GM12878 (cell line): ENCODE measurements at regions of chr17 and their contacts with region 1.

Region 1: GRCh38 chr17:50361561-50362480 is 11.2 kb downstream of the MRPL27 start:
- DNase-seq: no peak
- ATAC-seq: peak; percentile 94
- H3K4me3 ChIP-seq: no peak overlapping the region
- H3K27ac ChIP-seq: no peak overlapping the region
- H3K4me1 ChIP-seq: no peaks in the 10 kb centered on the region
- H3K27me3 ChIP-seq: no peaks in the 10 kb centered on the region
- CTCF ChIP-seq: peak; percentile 79 to 83 (median 80)
- EP300 ChIP-seq: no peak
- POLR2A ChIP-seq: 0 out of 2 replicates have a peak, but pooled peaks have one; percentile 28
- RAD21 ChIP-seq: peak; percentile 63

Region 2: DNA sequence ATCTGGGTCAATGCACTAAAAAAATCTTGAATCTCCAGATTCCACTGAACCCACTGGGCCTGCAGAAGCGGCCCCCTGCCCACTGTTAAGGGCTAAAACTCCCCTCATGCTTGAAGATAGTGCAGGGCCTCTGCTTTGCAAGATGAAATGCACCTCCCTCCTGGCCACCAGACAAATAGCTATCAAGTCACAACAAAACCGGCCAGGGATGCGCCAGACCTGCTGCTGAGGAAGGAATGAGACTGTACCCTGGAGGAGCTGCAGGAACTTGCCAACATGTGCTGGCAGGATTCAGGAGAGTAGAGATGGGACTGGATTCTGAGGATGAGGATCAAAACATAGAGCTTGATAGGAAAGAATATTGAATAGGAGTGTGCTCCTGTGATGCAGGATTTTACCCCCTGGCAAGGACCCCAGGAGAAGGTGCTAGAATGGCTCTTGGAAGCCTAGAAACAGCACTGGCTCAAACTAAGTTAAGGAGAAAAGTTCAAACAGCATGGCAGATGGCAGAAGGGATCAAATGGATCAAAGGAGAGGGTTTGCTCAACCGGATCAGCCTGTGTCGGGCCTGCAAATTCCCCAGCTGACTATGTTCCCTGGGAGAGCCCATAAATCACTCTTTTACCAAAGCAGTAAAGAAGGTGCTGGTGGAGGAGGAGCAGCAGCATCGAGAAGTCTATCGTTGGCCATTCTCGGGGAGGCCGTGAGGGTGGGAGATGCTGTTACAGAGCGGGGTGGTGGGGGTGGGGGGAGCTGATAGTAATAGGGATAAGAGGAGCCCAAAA is 43.1 kb before region 1 on chr17:
- CTCF ChIA-PET with region 1: interaction called, 12 read pairs
- POLR2A ChIA-PET with region 1: no interaction called
- RAD21 ChIA-PET with region 1: interaction called, 5 read pairs
- SMC1A ChIA-PET with region 1: interaction called, 9 read pairs
- in situ Hi-C with region 1: no loop called
- intact Hi-C with region 1: no loop called
- DNase-seq: no peak
- ATAC-seq: no peak
- H3K4me3 ChIP-seq: no peak overlapping the region
- H3K27ac ChIP-seq: no peak overlapping the region
- H3K4me1 ChIP-seq: peaks cover 4% of the 10 kb centered on the region; the same call in 1 of the 2 replicates
- H3K27me3 ChIP-seq: no peaks in the 10 kb centered on the region
- CTCF ChIP-seq: no peak
- EP300 ChIP-seq: no peak
- POLR2A ChIP-seq: no peak
- RAD21 ChIP-seq: no peak

Region 3: GRCh38 chr17:50372758-50373556 is 11.1 kb after region 1 on chr17 and contains the starts of genes EME1 and MRPL27:
- CTCF ChIA-PET with region 1: interaction called, 48 read pairs
- POLR2A ChIA-PET with region 1: interaction called, 5 read pairs
- RAD21 ChIA-PET with region 1: no interaction called
- SMC1A ChIA-PET with region 1: interaction called, 9 read pairs
- in situ Hi-C with region 1: no loop called
- intact Hi-C with region 1: no loop called
- DNase-seq: peak; percentile 85
- ATAC-seq: peak; percentile 95
- H3K4me3 ChIP-seq: peak within 1 kb of the TSS; percentile 72
- H3K27ac ChIP-seq: peak within 1 kb of the TSS; percentile 95
- H3K4me1 ChIP-seq: no peaks in the 10 kb centered on the region; the same call in 1 of the 2 replicates
- H3K27me3 ChIP-seq: no peaks in the 10 kb centered on the region
- CTCF ChIP-seq: no peak
- EP300 ChIP-seq: peak in 1 of 2 experiments; percentile 54; a peak in 1 of 4 replicates
- POLR2A ChIP-seq: peak; percentile 99
- RAD21 ChIP-seq: no peak
- polyA plus RNA-seq, gene EME1: 13.8 to 16.7 TPM
- polyA plus RNA-seq, gene MRPL27: 380 to 390 TPM

Region 4: DNA sequence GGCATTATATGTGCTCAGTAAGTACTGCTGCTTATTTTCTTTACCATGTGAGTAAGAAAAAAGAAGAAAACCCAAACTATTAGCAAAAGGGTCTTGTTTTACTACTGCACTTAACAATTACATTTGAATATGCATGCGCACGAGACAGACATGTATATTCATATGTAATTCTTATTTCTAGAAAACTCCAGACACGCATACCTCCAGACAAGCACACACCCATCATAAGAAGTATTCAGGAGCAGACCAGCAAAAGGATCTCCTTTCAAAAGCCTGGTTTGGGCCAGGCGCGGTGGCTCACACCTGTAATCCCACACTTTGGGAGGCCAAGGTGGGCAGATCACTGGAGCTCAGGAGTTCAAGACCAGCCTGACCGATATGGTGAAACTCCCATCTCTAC is 27.7 kb after region 1 on chr17:
- CTCF ChIA-PET with region 1: interaction called, 18 read pairs
- POLR2A ChIA-PET with region 1: interaction called, 7 read pairs
- RAD21 ChIA-PET with region 1: interaction called, 6 read pairs
- SMC1A ChIA-PET with region 1: interaction called, 16 read pairs
- in situ Hi-C with region 1: no loop called
- intact Hi-C with region 1: no loop called
- DNase-seq: no peak
- ATAC-seq: no peak
- H3K4me3 ChIP-seq: no peak overlapping the region
- H3K27ac ChIP-seq: no peak overlapping the region
- H3K4me1 ChIP-seq: peaks cover 13% of the 10 kb centered on the region
- H3K27me3 ChIP-seq: no peaks in the 10 kb centered on the region
- CTCF ChIP-seq: no peak
- EP300 ChIP-seq: no peak
- POLR2A ChIP-seq: no peak
- RAD21 ChIP-seq: no peak

Region 5: GRCh38 chr17:50414808-50415207 is 53.0 kb after region 1 on chr17:
- CTCF ChIA-PET with region 1: interaction called, 4 read pairs
- POLR2A ChIA-PET with region 1: no interaction called
- RAD21 ChIA-PET with region 1: no interaction called
- SMC1A ChIA-PET with region 1: interaction called, 6 read pairs
- in situ Hi-C with region 1: loop called (anchors 5 kb)
- intact Hi-C with region 1: no loop called
- DNase-seq: no peak
- ATAC-seq: no peak
- H3K4me3 ChIP-seq: no peak overlapping the region
- H3K27ac ChIP-seq: no peak overlapping the region
- H3K4me1 ChIP-seq: no peaks in the 10 kb centered on the region
- H3K27me3 ChIP-seq: no peaks in the 10 kb centered on the region
- CTCF ChIP-seq: no peak
- EP300 ChIP-seq: no peak
- POLR2A ChIP-seq: no peak
- RAD21 ChIP-seq: no peak

Region 6: GRCh38 chr17:50613007-50613992 is 251.5 kb after region 1 on chr17:
- CTCF ChIA-PET with region 1: no interaction called
- POLR2A ChIA-PET with region 1: no interaction called
- RAD21 ChIA-PET with region 1: no interaction called
- SMC1A ChIA-PET with region 1: no interaction called
- in situ Hi-C with region 1: no loop called
- intact Hi-C with region 1: no loop called
- DNase-seq: no peak
- ATAC-seq: no peak
- H3K4me3 ChIP-seq: no peak overlapping the region
- H3K27ac ChIP-seq: no peak overlapping the region
- H3K4me1 ChIP-seq: no peaks in the 10 kb centered on the region
- H3K27me3 ChIP-seq: peaks cover 0 to 6% of the 10 kb centered on the region in 2 experiments; a peak in 2 of 4 replicates
- CTCF ChIP-seq: no peak
- EP300 ChIP-seq: no peak
- POLR2A ChIP-seq: no peak
- RAD21 ChIP-seq: no peak

Region 7: GRCh38 chr17:50649042-50649904 is 287.5 kb after region 1 on chr17:
- CTCF ChIA-PET with region 1: no interaction called
- POLR2A ChIA-PET with region 1: no interaction called
- RAD21 ChIA-PET with region 1: no interaction called
- SMC1A ChIA-PET with region 1: no interaction called
- in situ Hi-C with region 1: no loop called
- intact Hi-C with region 1: no loop called
- DNase-seq: no peak
- ATAC-seq: 0 out of 3 replicates have a peak, but pooled peaks have one; percentile 19
- H3K4me3 ChIP-seq: no peak overlapping the region
- H3K27ac ChIP-seq: no peak overlapping the region
- H3K4me1 ChIP-seq: no peaks in the 10 kb centered on the region
- H3K27me3 ChIP-seq: no peaks in the 10 kb centered on the region
- CTCF ChIP-seq: no peak
- EP300 ChIP-seq: no peak
- POLR2A ChIP-seq: no peak
- RAD21 ChIP-seq: no peak